HEK293 (cell line): ENCODE measurements at regions of chr7 and their contacts with region 1.

Region 1: DNA sequence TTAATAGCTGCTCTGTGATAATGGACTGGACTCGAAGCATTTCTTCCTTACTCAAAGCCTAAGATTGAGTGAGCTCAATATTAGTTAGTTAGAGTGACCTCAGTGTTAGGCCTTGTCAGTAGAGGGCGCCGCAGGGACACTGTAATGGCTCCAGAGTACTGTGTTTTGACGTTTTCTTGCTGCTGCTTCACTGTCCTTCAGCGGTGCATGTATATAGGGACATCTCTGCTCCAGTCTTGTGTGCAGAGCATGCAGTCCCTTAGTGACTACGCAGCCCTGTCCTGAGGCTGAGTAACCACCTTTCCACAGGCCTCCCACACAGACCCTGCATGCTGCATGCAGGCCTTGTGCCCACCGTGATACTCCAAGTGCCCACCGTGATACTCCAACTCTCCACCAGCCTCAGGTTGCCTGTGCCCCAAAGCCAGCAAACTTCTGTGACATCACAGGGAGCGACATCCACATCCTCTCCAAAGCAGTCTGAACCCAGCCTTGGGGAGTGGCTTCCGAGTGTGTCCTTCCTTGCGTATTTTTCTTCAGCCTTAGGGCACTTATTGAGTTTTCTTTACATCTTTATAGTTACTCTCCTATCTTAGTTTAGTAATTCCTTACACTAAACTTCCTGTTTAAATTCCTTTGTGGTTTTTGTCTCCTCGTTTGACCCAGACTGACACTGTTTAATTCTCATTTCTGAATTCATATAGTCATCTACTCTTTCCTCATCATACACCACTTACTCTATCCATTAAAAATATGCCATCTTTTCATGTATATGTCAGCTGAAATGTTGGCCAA is 118.2 kb downstream of the JAZF1 start:
- H3K4me3 ChIP-seq: peak overlapping the region; percentile 6; the same call in 1 of the 2 replicates
- H3K27ac ChIP-seq: no peak overlapping the region
- H3K4me1 ChIP-seq: no peaks in the 10 kb centered on the region
- CTCF ChIP-seq: peak; percentile 64

Region 2: GRCh38 chr7:27808626-27809025 is 253.8 kb before region 1 on chr7:
- CTCF ChIA-PET with region 1: no interaction called
- POLR2A ChIA-PET with region 1: no interaction called
- H3K4me3 ChIP-seq: no peak overlapping the region
- H3K27ac ChIP-seq: no peak overlapping the region
- H3K4me1 ChIP-seq: no peaks in the 10 kb centered on the region; the same call in 1 of the 2 replicates
- CTCF ChIP-seq: no peak

Region 3: GRCh38 chr7:27933671-27934565 is 128.5 kb before region 1 on chr7:
- CTCF ChIA-PET with region 1: no interaction called
- POLR2A ChIA-PET with region 1: no interaction called
- H3K4me3 ChIP-seq: no peak overlapping the region
- H3K27ac ChIP-seq: no peak overlapping the region
- H3K4me1 ChIP-seq: peaks cover 10% of the 10 kb centered on the region; the same call in 1 of the 2 replicates
- CTCF ChIP-seq: no peak

Region 4: DNA sequence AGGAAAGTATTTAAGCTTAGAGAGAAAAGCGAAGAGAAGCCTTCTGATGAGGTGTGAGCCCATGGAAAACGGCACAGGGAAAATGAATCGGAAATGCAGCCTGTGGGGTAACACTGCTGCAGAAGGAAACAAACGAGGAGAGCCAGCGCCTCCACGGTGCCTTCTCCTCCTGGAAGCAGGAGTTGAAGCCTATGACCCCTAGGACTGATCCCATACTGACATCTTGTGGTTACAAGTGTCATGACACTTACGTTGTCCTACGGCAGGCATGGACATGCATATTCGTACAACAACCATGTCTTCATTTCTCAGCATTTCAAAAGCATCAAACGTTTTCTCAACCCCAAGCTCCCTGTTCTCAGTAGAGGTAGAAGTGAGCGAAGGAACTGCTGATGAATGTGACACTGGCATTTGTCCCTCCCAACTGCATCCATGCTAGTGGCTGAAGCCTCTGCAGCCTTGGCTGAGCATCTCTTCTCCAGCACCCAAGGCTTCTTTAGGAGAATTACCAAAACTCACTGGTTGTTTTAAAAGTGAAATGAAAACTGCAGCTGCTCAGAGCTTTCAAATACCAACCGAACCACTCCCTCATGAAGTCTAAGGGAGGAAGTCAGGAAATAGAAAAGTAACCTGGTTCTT is 42.0 kb before region 1 on chr7:
- CTCF ChIA-PET with region 1: interaction called, 14 read pairs
- POLR2A ChIA-PET with region 1: no interaction called
- H3K4me3 ChIP-seq: no peak overlapping the region
- H3K27ac ChIP-seq: no peak overlapping the region
- H3K4me1 ChIP-seq: peaks cover 5% of the 10 kb centered on the region; the same call in 1 of the 2 replicates
- CTCF ChIP-seq: peak; percentile 91

Region 5: DNA sequence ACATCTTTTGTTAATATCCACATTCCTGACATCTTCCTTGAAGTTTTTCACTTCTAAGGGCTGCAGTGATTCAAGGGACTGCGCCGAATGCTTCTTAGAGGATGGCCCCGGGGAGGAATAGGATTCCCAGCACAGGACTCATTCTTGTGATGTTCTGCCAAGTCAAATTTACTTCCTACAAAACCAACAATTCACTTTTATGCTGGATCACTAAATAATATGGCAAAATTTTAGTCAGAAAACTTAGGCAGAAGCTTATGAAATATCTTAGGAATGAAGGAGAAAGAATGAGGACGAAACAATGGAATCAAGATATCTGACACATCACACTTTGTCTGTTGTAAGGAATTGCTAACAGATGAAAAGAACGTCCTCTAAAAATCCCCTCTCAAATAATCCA is 33.3 kb before region 1 on chr7:
- CTCF ChIA-PET with region 1: interaction called, 15 read pairs
- POLR2A ChIA-PET with region 1: no interaction called
- H3K4me3 ChIP-seq: no peak overlapping the region
- H3K27ac ChIP-seq: no peak overlapping the region
- H3K4me1 ChIP-seq: no peaks in the 10 kb centered on the region; the same call in 1 of the 2 replicates
- CTCF ChIP-seq: no peak

Region 6: GRCh38 chr7:28078036-28078901 is 15.9 kb after region 1 on chr7:
- CTCF ChIA-PET with region 1: interaction called, 82 read pairs
- POLR2A ChIA-PET with region 1: interaction called, 3 read pairs
- H3K4me3 ChIP-seq: no peak overlapping the region
- H3K27ac ChIP-seq: no peak overlapping the region
- H3K4me1 ChIP-seq: peaks cover 7% of the 10 kb centered on the region; the same call in 1 of the 2 replicates
- CTCF ChIP-seq: peak; percentile 21; the same call in 1 of the 2 replicates

Region 7: GRCh38 chr7:28083164-28083997 is 21.0 kb after region 1 on chr7:
- CTCF ChIA-PET with region 1: interaction called, 82 read pairs
- POLR2A ChIA-PET with region 1: no interaction called
- H3K4me3 ChIP-seq: no peak overlapping the region
- H3K27ac ChIP-seq: no peak overlapping the region
- H3K4me1 ChIP-seq: peaks cover 15% of the 10 kb centered on the region
- CTCF ChIP-seq: no peak